ENCODE measurements at regions of chr11 and their contacts with region 1.

Region 1: DNA sequence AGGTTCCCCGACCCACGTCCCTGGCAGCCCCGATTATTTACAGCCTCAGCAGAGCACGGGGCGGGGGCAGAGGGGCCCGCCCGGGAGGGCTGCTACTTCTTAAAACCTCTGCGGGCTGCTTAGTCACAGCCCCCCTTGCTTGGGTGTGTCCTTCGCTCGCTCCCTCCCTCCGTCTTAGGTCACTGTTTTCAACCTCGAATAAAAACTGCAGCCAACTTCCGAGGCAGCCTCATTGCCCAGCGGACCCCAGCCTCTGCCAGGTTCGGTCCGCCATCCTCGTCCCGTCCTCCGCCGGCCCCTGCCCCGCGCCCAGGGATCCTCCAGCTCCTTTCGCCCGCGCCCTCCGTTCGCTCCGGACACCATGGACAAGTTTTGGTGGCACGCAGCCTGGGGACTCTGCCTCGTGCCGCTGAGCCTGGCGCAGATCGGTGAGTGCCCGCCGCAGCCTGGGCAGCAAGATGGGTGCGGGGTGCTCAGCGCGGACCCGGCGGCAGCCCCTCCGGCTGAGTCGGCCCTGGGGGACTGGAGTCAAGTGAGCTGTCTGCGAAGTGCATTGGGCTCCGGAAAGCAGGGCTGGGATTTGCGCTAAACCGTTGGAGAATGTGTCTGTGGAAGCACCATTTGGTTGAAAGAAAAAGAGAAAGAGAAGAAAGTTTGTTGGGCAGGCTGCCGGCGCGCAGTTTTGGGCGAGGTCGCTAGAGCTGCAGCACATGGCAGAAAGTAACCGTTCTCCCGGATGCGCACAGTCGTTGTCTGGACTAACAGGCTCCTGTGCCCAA is at the start of gene CD44:
- DNase-seq: peak; percentile 73 to 94 (median 83)
- H3K4me3 ChIP-seq: peak within 1 kb of the TSS; percentile 82
- H3K4me3 Mint-ChIP-seq: peak within 1 kb of the TSS; percentile 91 to 97 (median 95)
- H3K27ac ChIP-seq: peak within 1 kb of the TSS; percentile 95
- H3K27ac Mint-ChIP-seq: peak within 1 kb of the TSS; percentile 96 to 100 (median 97)
- H3K4me1 ChIP-seq: peaks cover 40% of the 10 kb centered on the region
- H3K4me1 Mint-ChIP-seq: peaks cover 44 to 55% (median 53%) of the 10 kb centered on the region in 3 donors
- H3K27me3 ChIP-seq: no peaks in the 10 kb centered on the region
- H3K27me3 Mint-ChIP-seq: peaks cover 0 to 2% of the 10 kb centered on the region in 2 donors
- total RNA-seq, gene CD44: 510 to 534 TPM

Region 2: DNA sequence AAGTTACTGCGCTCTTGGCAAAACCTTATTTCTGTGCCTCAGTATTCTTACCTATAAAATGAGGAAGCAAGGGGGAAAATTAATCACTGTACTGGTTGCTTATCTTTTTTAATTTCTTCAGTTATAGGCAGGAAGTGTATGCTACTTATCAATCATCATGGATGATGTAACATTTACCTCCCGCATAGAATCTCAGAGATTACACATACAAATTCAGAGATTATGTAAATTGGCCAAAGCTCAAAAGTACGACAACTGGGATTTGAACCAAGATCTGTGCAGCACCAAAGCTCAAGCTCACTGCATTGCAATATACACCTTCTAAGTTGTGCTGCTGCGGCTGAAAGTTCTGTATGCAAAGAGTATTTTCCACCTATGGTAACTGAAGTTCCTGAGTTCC is 139.7 kb before region 1 on chr11:
- CTCF ChIA-PET with region 1: interaction called, 12 read pairs
- POLR2A ChIA-PET with region 1: interaction called, 4 read pairs
- DNase-seq: no peak
- H3K4me3 ChIP-seq: no peak overlapping the region
- H3K4me3 Mint-ChIP-seq: no peak overlapping the region
- H3K27ac ChIP-seq: no peak overlapping the region
- H3K27ac Mint-ChIP-seq: peak overlapping the region in 5 of 8 donors; percentile 9 to 69 (median 68)
- H3K4me1 ChIP-seq: peaks cover 17% of the 10 kb centered on the region
- H3K4me1 Mint-ChIP-seq: peaks cover 19 to 45% (median 44%) of the 10 kb centered on the region in 3 donors
- H3K27me3 ChIP-seq: no peaks in the 10 kb centered on the region
- H3K27me3 Mint-ChIP-seq: no peaks in the 10 kb centered on the region

Region 3: GRCh38 chr11:35173011-35173511 is 33.9 kb after region 1 on chr11:
- CTCF ChIA-PET with region 1: interaction called, 9 read pairs
- POLR2A ChIA-PET with region 1: interaction called, 10 read pairs
- DNase-seq: no peak
- H3K4me3 ChIP-seq: peak overlapping the region; percentile 16
- H3K4me3 Mint-ChIP-seq: peak overlapping the region; percentile 49 to 77 (median 69)
- H3K27ac ChIP-seq: peak overlapping the region; percentile 52
- H3K27ac Mint-ChIP-seq: peak overlapping the region; percentile 96 to 100 (median 100)
- H3K4me1 ChIP-seq: peaks cover 94% of the 10 kb centered on the region
- H3K4me1 Mint-ChIP-seq: peaks cover 94 to 95% (median 95%) of the 10 kb centered on the region in 3 donors
- H3K27me3 ChIP-seq: no peaks in the 10 kb centered on the region
- H3K27me3 Mint-ChIP-seq: peaks cover 0 to 2% of the 10 kb centered on the region in 2 donors

Measured in CD8-positive, alpha-beta memory T cell (primary cell).